ENCODE measurements at regions of chr13 and their contacts with region 1.

Region 1: DNA sequence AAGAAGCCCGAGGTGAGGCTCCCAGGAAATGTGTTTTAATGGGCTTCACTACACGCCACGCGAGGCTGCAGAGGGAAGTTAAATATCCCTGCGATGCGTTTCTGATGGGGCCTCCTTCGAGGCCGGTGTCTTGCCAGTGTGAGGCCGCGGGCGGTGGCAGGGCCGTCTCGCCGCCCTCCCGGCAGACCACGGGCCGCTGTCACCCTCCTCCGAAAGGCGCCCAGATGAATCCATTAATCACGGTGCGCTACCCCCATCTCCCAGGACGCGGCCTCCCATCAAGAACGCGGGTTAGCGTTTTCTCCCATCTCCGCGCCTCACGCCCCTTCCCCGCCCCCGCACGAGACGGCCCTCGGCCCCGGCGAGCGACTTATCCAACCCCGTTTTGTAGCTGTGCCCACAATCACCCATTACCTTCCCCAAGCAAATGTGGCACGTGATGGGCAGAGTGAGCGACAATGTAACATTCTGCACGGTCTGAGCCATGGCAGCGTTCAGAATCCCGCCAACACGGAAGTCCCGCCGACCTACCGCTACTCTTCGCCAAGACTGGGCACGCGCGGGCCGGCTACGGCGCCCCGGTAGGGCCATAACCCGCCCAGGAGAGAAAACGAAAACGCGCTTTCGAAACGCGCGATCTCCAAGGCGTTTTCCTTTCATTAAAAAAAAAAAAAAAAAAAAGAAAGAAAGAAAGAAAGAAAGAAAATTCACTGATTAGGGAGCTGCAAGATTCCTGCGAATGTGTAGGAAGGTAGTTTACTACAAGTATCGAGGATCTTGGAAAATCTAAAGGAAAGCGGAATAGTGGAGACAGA is at the start of gene OBI1:
- DNase-seq: peak; percentile 96
- ATAC-seq: peak; percentile 98
- total RNA-seq, gene OBI1: 9.7 TPM

Region 2: DNA sequence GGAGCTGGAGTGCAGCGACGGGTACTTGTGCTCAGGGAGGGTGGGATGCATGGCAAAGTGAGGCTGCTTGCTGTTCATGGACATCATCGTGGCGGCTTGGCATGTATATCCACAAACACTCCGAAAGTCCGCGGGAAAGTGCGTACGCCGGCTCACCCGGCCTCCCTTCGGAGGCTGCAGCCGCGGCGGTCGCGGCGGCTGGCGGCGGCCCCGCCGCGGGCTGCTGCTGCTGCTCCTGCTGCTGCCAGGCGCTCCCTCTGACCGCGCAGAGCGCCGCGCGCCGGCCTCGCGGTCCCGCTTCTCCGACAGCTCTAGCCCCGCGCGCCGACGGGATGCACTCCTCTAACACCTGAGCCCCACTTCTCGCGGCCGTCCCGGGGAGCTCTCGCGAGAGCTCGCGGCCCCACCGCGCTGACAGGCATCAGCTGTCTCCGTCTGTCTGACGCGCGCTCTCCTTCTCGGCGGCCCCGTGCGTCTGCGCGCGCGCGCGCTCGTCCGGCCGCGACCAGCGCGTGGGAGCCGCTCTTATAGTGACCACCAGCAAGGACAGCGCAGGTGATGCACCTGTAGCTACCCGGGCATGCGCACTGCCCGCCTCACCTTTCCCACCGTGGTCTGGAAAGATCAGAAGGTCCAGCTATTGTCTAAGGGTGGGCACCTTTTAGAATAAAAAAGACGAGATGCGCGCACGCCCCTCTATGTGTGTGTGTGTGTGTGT is 55.4 kb before region 1 on chr13 and contains the start of gene POU4F1:
- intact Hi-C with region 1: loop called (anchors 10 kb)
- DNase-seq: peak; percentile 64
- ATAC-seq: peak; percentile 20
- total RNA-seq, gene POU4F1: not detected

Region 3: DNA sequence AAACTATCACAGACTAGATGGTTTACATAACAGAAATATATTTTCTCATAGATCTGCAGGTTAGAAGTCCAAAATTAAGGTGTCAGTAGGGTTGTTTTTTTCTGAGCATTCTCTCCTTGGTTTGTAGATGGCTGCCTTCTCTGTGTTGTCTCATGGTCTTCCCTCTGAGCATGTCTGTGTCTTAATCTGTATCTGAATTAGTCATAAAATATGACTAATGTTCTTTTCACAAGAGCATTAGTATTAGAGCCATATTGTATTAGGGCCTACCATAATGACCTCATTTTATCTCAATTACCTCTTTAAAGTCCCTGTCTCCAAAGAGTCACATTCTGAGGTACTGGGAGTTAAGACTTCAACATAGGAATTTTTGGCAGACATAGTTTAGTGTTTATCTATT is 77.3 kb after region 1 on chr13:
- intact Hi-C with region 1: no loop called
- DNase-seq: no peak
- ATAC-seq: no peak